ENCODE measurements at regions of chr1 and their contacts with region 1.

Region 1: GRCh38 chr1:26233903-26234643 is at the start of gene CEP85:
- DNase-seq: peak; percentile 97
- ATAC-seq: peak; percentile 93
- H3K4me3 ChIP-seq: peak within 1 kb of the TSS; percentile 98
- H3K27ac ChIP-seq: peak within 1 kb of the TSS; percentile 68
- H3K4me1 ChIP-seq: peaks cover 21 to 38% of the 10 kb centered on the region in 2 experiments
- H3K27me3 ChIP-seq: no peaks in the 10 kb centered on the region
- CTCF ChIP-seq: peak; percentile 89 to 92 (median 90)
- POLR2A ChIP-seq: peak; percentile 91
- RAD21 ChIP-seq: peak; percentile 77
- total RNA-seq, gene CEP85: 37.2 TPM

Region 2: GRCh38 chr1:25944986-25945385 is 289.1 kb before region 1 on chr1:
- CTCF ChIA-PET with region 1: no interaction called
- POLR2A ChIA-PET with region 1: no interaction called
- RAD21 ChIA-PET with region 1: no interaction called
- intact Hi-C with region 1: no loop called
- DNase-seq: no peak
- ATAC-seq: no peak
- H3K4me3 ChIP-seq: no peak overlapping the region
- H3K27ac ChIP-seq: no peak overlapping the region
- H3K4me1 ChIP-seq: no peaks in the 10 kb centered on the region
- H3K27me3 ChIP-seq: no peaks in the 10 kb centered on the region
- CTCF ChIP-seq: no peak
- POLR2A ChIP-seq: no peak
- RAD21 ChIP-seq: no peak

Region 3: DNA sequence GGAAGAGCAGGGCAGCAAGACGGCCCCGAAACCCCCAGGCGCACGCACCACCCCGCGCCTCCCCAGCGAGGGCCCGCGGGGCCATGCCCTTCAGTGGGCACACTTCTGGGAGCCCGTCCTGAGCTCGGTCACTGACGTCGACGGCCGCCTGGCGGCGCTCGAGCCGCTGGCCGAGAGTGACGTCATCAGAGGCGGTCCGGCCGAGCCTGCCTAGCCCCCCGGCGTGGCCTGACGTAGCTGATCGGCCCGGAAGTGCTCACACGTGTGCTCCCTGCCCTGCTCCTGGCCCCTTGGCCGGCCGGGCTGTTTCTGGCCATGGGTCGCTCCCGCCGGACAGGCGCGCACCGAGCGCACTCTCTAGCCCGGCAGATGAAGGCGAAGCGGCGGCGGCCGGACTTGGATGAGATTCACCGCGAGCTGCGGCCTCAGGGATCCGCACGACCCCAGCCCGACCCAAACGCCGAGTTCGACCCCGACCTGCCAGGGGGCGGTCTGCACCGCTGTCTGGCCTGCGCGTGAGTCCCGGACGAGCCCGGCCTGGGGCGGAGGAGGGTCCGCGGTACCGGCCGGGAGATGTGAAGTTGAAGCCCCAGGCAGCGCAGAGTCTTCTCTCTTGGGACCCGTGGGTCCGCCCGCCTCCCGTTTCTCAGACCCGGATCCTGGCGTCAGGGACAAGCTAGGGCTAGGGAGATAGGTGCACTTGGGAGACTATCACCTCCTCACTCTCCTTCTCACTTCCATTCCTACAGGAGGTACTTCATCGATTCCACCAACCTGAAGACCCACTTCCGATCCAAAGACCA is 64.2 kb before region 1 on chr1 and contains the start of gene ZNF593:
- CTCF ChIA-PET with region 1: interaction called, 27 read pairs
- POLR2A ChIA-PET with region 1: interaction called, 8 read pairs
- RAD21 ChIA-PET with region 1: interaction called, 4 to 6 read pairs
- intact Hi-C with region 1: loop called (anchors 5 kb)
- DNase-seq: peak; percentile 86
- ATAC-seq: peak; percentile 92
- H3K4me3 ChIP-seq: peak within 1 kb of the TSS; percentile 89 to 96
- H3K27ac ChIP-seq: peak within 1 kb of the TSS; percentile 74
- H3K4me1 ChIP-seq: peaks cover 4 to 22% of the 10 kb centered on the region in 2 experiments; a peak in 3 of 4 replicates
- H3K27me3 ChIP-seq: no peaks in the 10 kb centered on the region
- CTCF ChIP-seq: peak; percentile 80 to 84 (median 81)
- POLR2A ChIP-seq: no peak
- RAD21 ChIP-seq: peak; percentile 59
- total RNA-seq, gene ZNF593: 62.4 TPM

Region 4: GRCh38 chr1:26190373-26190987 is 43.6 kb before region 1 on chr1 and contains the start of gene CATSPER4:
- CTCF ChIA-PET with region 1: interaction called, 16 read pairs
- POLR2A ChIA-PET with region 1: no interaction called
- RAD21 ChIA-PET with region 1: no interaction called
- intact Hi-C with region 1: no loop called
- DNase-seq: no peak
- ATAC-seq: peak; percentile 82
- H3K4me3 ChIP-seq: no peak within 1 kb of the TSS
- H3K27ac ChIP-seq: no peak within 1 kb of the TSS
- H3K4me1 ChIP-seq: no peaks in the 10 kb centered on the region
- H3K27me3 ChIP-seq: no peaks in the 10 kb centered on the region
- CTCF ChIP-seq: peak; percentile 21 to 32 (median 25); a peak in 4 of 6 replicates
- POLR2A ChIP-seq: no peak
- RAD21 ChIP-seq: peak; percentile 46
- total RNA-seq, gene CATSPER4: not detected

Region 5: GRCh38 chr1:26220199-26220912 is 13.7 kb before region 1 on chr1:
- CTCF ChIA-PET with region 1: interaction called, 29 read pairs
- POLR2A ChIA-PET with region 1: interaction called, 4 read pairs
- RAD21 ChIA-PET with region 1: no interaction called
- intact Hi-C with region 1: no loop called
- DNase-seq: no peak
- ATAC-seq: peak; percentile 49; the same call in 1 of the 2 replicates
- H3K4me3 ChIP-seq: no peak overlapping the region
- H3K27ac ChIP-seq: no peak overlapping the region
- H3K4me1 ChIP-seq: peaks cover 9 to 10% of the 10 kb centered on the region in 2 experiments; a peak in 2 of 4 replicates
- H3K27me3 ChIP-seq: no peaks in the 10 kb centered on the region
- CTCF ChIP-seq: no peak
- POLR2A ChIP-seq: no peak
- RAD21 ChIP-seq: no peak

Region 6: DNA sequence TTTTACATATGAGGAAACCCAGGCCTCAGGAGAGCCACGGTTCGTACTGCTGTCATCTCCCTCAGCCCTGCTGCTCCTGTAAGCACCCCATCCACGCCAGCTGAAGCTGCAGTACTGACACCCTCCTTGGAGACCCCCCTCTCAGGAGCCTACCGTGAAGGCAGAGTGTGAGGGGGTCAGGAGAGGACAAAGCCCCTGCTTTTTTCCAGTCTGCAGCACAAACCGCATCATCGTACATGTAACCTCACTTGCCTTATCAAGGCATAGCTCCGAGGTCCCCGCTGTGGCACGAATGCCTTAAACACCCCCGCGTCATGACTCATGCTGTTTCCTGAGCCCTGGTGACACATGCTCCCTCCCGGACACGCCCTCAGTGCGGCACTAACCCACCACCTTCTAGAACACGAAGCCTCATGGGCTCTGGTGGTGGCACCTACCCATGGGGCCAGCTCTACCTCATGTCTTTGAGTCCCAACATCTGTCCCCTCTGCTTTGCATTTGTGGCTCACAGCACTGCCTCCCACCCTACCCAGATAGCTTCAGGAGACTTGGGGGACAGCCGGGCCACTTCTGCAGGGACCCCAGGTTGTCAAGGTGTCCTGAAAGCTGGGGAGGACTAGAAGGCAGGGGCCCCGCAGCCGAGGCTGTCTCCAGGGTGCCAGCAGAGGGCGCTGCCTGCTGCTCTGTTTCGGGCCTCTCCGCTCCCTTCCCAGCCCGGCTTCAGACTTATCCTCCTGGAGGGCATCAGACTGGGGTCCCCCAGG is 50.7 kb after region 1 on chr1:
- CTCF ChIA-PET with region 1: interaction called, 16 read pairs
- POLR2A ChIA-PET with region 1: no interaction called
- RAD21 ChIA-PET with region 1: no interaction called
- intact Hi-C with region 1: no loop called
- DNase-seq: peak; percentile 91
- ATAC-seq: peak; percentile 68
- H3K4me3 ChIP-seq: peak overlapping the region in 1 of 2 experiments; percentile 31; a peak in 2 of 4 replicates
- H3K27ac ChIP-seq: peak overlapping the region; percentile 58
- H3K4me1 ChIP-seq: peaks cover 25 to 67% of the 10 kb centered on the region in 2 experiments
- H3K27me3 ChIP-seq: no peaks in the 10 kb centered on the region
- CTCF ChIP-seq: peak in 2 of 3 experiments; percentile 87; a peak in 4 of 6 replicates
- POLR2A ChIP-seq: no peak
- RAD21 ChIP-seq: no peak